Heart right ventricle (tissue), 16 donors: ENCODE measurements at regions of chr11 and their contacts with region 1.

Region 1: DNA sequence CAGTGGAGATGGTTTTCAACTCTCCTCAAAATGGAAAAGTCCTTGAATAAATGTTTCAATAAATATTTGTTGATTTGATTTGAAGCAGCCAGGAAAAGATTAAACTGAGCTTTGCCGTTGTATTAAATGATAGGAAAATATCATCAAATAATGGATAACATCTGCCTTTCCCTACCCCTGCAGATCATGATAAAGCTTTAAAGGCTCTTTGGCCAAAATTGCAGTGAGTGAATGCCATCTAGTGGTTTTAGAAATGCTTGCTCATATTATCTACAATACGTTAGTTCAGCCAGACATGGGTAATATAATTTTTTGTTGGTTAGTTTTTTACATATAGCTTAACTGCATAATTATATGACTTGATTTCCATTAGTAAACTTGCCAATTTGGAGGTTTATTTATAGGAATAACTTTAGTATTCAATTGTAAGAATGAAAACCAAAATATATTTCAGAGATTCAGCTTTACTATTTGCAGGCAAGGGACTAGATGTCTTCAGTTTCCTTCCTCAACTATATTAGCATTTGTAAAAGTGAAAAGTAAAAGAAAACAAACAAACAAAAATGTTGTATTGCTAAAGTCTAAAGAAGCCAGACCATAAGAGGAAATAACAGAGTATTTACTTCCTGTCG is 159.2 kb downstream of the MSANTD4 start:
- DNase-seq: no peak
- ATAC-seq: no peak
- H3K4me3 ChIP-seq: no peak overlapping the region
- H3K27ac ChIP-seq: no peak overlapping the region
- H3K4me1 ChIP-seq: no peaks in the 10 kb centered on the region
- H3K27me3 ChIP-seq: peaks cover 0 to 8% (median 0%) of the 10 kb centered on the region in 7 donors
- CTCF ChIP-seq: peak; percentile 28 to 70 (median 64)

Region 2: GRCh38 chr11:104254347-104254746 is 1608.5 kb before region 1 on chr11:
- intact Hi-C with region 1: loop called in 1 of 10 experiments (anchors 10 kb)
- DNase-seq: peak in 1 of 2 donors; percentile 8
- ATAC-seq: peak in 5 of 8 donors; percentile 35 to 78 (median 42)
- H3K4me3 ChIP-seq: no peak overlapping the region
- H3K27ac ChIP-seq: no peak overlapping the region
- H3K4me1 ChIP-seq: no peaks in the 10 kb centered on the region
- H3K27me3 ChIP-seq: no peaks in the 10 kb centered on the region
- CTCF ChIP-seq: peak in 8 of 9 donors; percentile 31 to 60 (median 54)

Region 3: DNA sequence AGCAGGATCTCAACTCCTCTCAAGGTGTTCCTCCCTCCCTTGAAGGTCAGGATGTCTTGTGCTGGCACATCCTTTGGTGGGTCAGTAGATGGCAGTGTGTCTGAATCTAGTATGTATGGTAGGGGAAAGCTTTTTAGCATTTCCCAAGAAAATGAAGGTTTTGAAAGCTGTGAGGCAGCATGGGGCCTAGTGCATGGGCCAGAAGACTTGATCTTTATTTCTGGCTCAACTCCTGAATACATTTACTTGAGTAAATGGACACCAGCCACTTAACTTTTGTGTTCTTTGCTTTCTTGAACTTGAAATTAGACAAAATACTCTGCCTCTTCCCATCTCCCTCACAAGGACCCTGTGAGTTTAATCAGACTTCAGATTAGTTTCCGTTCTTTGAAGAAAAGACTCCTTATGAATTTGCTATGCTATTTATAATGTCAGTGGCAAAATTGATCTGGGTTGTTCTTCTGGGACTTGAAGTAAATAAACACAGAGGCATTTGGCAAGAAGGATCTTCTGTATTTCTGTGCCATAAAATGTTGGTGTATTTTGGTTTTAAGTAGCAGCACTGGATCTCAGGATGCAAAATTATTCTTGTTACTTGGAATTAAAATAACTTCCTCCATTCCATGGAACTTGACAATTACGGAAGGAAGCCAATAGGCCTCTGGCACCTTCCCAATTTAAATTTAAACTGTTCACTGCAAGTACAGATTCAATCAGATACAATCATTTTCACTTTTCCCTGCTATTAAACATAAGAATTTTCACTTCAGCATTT is 1253.4 kb before region 1 on chr11:
- intact Hi-C with region 1: loop called in 1 of 10 experiments (anchors 5 kb)
- DNase-seq: peak in 1 of 2 donors; percentile 23
- ATAC-seq: peak; percentile 50 to 84 (median 82)
- H3K4me3 ChIP-seq: no peak overlapping the region
- H3K27ac ChIP-seq: peak overlapping the region in 6 of 10 donors; percentile 2 to 73 (median 30)
- H3K4me1 ChIP-seq: peaks cover 0 to 17% (median 11%) of the 10 kb centered on the region in 9 donors
- H3K27me3 ChIP-seq: no peaks in the 10 kb centered on the region
- CTCF ChIP-seq: peak; percentile 25 to 84 (median 63)

Region 4: GRCh38 chr11:105705786-105706530 is 156.9 kb before region 1 on chr11:
- intact Hi-C with region 1: no loop called
- DNase-seq: no peak
- ATAC-seq: no peak
- H3K4me3 ChIP-seq: no peak overlapping the region
- H3K27ac ChIP-seq: no peak overlapping the region
- H3K4me1 ChIP-seq: no peaks in the 10 kb centered on the region
- H3K27me3 ChIP-seq: no peaks in the 10 kb centered on the region
- CTCF ChIP-seq: no peak